Motor neuron (in vitro differentiated cells): ENCODE measurements at regions of chr1 and their contacts with region 1.

Region 1: GRCh38 chr1:119675349-119676345 is 27.6 kb upstream of the ZNF697 start:
- ATAC-seq: peak; percentile 79 to 95 (median 85)
- H3K4me3 ChIP-seq: peak overlapping the region in 4 of 5 donors; percentile 25 to 41 (median 26)
- H3K27ac ChIP-seq: no peak overlapping the region
- H3K4me1 ChIP-seq: peaks cover 11 to 12% of the 10 kb centered on the region in 2 donors

Region 2: GRCh38 chr1:119275145-119276134 is 400.2 kb before region 1 on chr1:
- in situ Hi-C with region 1: loop called in 1 of 9 experiments (anchors 25 kb)
- ATAC-seq: peak; percentile 39 to 77 (median 56)
- H3K4me3 ChIP-seq: no peak overlapping the region
- H3K27ac ChIP-seq: no peak overlapping the region
- H3K4me1 ChIP-seq: no peaks in the 10 kb centered on the region

Region 3: DNA sequence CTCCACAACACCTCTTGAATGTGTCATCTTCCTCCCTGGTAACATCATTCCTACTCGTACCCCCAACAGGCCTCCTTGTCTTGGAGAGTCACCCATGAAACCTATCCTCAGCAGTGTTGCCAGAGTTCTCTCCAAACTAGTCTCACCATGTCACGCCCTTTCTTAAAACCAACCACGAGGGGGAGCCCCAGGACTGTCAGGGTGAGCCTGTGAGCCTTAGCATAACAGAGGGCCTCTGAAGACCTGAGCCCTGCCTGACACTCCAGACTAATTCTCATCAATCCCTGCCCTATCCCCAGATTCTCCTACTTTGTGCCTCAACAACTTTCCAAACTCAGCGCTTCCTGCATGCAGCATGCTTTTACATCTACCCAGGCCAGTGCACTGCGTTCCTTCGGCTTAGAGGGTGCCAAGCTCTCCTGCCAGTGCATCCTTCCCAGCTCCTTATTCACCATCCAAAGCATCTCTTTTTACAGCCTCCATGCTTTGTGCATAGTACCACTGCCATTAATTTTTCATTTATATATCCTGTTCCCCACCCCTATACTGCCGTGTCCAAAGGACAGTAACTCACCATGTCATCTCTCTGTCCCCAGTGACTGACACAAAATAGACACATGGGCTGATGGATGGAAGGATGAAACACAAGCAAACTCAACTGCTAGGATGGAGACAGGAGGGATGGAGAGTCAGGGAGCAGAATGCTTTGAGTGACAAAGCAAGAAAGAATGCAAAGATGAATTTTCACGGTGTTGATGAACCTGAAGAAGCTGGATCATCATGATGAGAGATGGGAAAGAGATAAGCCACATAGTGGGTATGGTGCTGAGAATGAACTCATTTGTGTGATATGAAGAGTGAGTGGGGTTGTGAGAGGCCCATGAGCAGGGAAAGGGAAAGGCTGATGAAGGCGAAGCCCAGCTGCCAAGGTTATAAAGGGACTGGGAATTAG is 61.6 kb before region 1 on chr1:
- in situ Hi-C with region 1: loop called in 1 of 9 experiments (anchors 10 kb)
- ATAC-seq: peak; percentile 89 to 99 (median 94)
- H3K4me3 ChIP-seq: no peak overlapping the region
- H3K27ac ChIP-seq: no peak overlapping the region
- H3K4me1 ChIP-seq: no peaks in the 10 kb centered on the region